MCF 10A (cell line): ENCODE measurements at regions of chr1 and their contacts with region 1.

Region 1: DNA sequence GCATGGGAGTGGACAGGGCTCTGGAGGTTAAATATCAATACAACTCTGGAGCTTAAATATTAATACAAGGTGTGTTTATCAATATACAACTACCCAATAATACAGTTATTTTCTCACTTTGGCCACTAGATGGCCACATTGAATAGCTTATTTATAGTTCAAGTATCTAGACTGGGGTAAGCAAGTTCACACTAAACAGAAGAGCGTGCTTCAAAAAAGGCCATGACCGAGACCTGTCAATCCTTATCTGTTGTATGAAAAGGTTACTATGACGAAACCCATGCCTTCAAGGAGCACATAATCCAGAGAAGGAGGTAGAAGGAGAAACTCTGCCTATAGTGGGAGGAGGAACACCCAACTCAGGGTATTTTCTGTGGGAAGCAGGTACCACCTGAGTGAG is 29.1 kb downstream of the CHML start:
- DNase-seq: peak; percentile 92
- H3K4me3 Mint-ChIP-seq: no peak overlapping the region
- H3K27ac Mint-ChIP-seq: no peak overlapping the region
- H3K4me1 Mint-ChIP-seq: peaks cover 42% of the 10 kb centered on the region
- H3K27me3 Mint-ChIP-seq: no peaks in the 10 kb centered on the region
- CTCF ChIP-seq: peak; percentile 78

Region 2: DNA sequence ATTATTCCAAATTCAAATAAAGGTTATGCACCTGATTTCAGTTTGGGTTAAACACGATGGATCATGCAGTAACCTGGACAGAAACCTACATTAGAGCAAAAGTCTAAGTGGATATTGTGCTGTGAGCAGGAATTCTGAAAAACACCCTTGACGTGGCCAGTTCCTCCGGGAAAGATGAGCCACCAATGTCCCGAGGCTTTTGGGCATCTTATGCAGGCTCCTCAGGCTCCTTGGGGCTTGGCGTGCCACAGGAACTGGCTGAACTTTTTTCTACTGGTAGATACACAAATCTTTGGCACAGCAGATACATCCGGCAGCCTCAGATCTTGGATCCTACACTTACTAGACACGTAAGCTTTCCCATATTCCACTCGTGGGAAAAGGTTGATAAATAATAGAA is 44.4 kb before region 1 on chr1:
- CTCF ChIA-PET with region 1: interaction called, 12 read pairs
- POLR2A ChIA-PET with region 1: interaction called, 3 read pairs
- intact Hi-C with region 1: no loop called
- DNase-seq: no peak
- H3K4me3 Mint-ChIP-seq: no peak overlapping the region
- H3K27ac Mint-ChIP-seq: no peak overlapping the region
- H3K4me1 Mint-ChIP-seq: no peaks in the 10 kb centered on the region
- H3K27me3 Mint-ChIP-seq: no peaks in the 10 kb centered on the region
- CTCF ChIP-seq: no peak

Region 3: GRCh38 chr1:241640029-241640818 is 29.2 kb after region 1 on chr1 and contains the starts of genes CHML and OPN3:
- CTCF ChIA-PET with region 1: interaction called, 69 read pairs
- POLR2A ChIA-PET with region 1: interaction called, 47 read pairs
- intact Hi-C with region 1: loop called (anchors 2 kb)
- DNase-seq: peak; percentile 96
- H3K4me3 Mint-ChIP-seq: peak within 1 kb of the TSS; percentile 75
- H3K27ac Mint-ChIP-seq: peak within 1 kb of the TSS; percentile 100
- H3K4me1 Mint-ChIP-seq: peaks cover 56% of the 10 kb centered on the region
- H3K27me3 Mint-ChIP-seq: no peaks in the 10 kb centered on the region
- CTCF ChIP-seq: no peak
- total RNA-seq, gene CHML: 33.7 and 33.8 TPM in 2 replicates
- total RNA-seq, gene OPN3: 45.6 and 56.1 TPM in 2 replicates

Region 4: DNA sequence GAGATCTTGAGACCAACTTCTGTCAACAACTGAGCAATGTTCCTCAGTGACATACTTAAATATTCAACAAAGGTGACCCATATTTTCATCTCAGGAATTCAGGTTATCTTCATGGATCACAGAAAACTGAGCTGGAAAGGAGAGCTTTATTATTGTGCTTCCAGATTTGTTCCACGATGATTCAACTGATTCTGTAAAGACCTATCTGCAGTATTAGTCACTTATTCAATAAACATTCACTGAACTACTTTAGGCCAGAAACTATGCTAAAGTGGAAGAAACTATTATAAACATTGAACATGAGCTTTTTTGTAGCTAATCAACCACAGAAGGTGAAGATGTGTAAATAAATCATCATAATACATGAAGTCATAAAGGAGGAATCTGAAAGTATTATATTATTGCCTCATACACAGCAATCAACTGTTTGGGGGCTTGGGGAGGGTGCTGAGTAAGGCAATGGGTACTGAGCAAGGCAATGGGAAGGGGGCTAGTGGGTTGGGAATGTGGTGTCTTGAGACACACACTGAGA is 206.3 kb after region 1 on chr1:
- CTCF ChIA-PET with region 1: interaction called, 11 read pairs
- POLR2A ChIA-PET with region 1: no interaction called
- intact Hi-C with region 1: no loop called
- DNase-seq: no peak
- H3K4me3 Mint-ChIP-seq: no peak overlapping the region
- H3K27ac Mint-ChIP-seq: no peak overlapping the region
- H3K4me1 Mint-ChIP-seq: peaks cover 14% of the 10 kb centered on the region
- H3K27me3 Mint-ChIP-seq: no peaks in the 10 kb centered on the region
- CTCF ChIP-seq: no peak

Region 5: GRCh38 chr1:241847796-241848685 is 237.0 kb after region 1 on chr1 and contains the start of gene EXO1:
- CTCF ChIA-PET with region 1: interaction called, 110 read pairs
- POLR2A ChIA-PET with region 1: interaction called, 27 read pairs
- intact Hi-C with region 1: no loop called
- DNase-seq: peak; percentile 98
- H3K4me3 Mint-ChIP-seq: peak within 1 kb of the TSS; percentile 95
- H3K27ac Mint-ChIP-seq: peak within 1 kb of the TSS; percentile 81
- H3K4me1 Mint-ChIP-seq: peaks cover 18% of the 10 kb centered on the region
- H3K27me3 Mint-ChIP-seq: no peaks in the 10 kb centered on the region
- CTCF ChIP-seq: peak; percentile 38
- total RNA-seq, gene EXO1: 7.3 and 17.5 TPM in 2 replicates

Region 6: GRCh38 chr1:242017584-242018233 is 406.6 kb after region 1 on chr1:
- CTCF ChIA-PET with region 1: interaction called, 10 read pairs
- POLR2A ChIA-PET with region 1: no interaction called
- intact Hi-C with region 1: loop called (anchors 5 kb)
- DNase-seq: peak; percentile 86
- H3K4me3 Mint-ChIP-seq: no peak overlapping the region
- H3K27ac Mint-ChIP-seq: no peak overlapping the region
- H3K4me1 Mint-ChIP-seq: peaks cover 7% of the 10 kb centered on the region
- H3K27me3 Mint-ChIP-seq: no peaks in the 10 kb centered on the region
- CTCF ChIP-seq: peak; percentile 88